GM12878 (cell line): ENCODE measurements at regions of chr2 and their contacts with region 1.

Region 1: GRCh38 chr2:77954931-77955330 is 432.8 kb upstream of the LRRTM4 start:
- DNase-seq: no peak
- ATAC-seq: no peak
- H3K4me3 ChIP-seq: no peak overlapping the region
- H3K27ac ChIP-seq: no peak overlapping the region
- H3K4me1 ChIP-seq: no peaks in the 10 kb centered on the region
- H3K27me3 ChIP-seq: no peaks in the 10 kb centered on the region
- CTCF ChIP-seq: peak in 2 of 3 experiments; percentile 11 to 24; a peak in 1 of 6 replicates
- EP300 ChIP-seq: no peak
- POLR2A ChIP-seq: no peak
- RAD21 ChIP-seq: no peak

Region 2: DNA sequence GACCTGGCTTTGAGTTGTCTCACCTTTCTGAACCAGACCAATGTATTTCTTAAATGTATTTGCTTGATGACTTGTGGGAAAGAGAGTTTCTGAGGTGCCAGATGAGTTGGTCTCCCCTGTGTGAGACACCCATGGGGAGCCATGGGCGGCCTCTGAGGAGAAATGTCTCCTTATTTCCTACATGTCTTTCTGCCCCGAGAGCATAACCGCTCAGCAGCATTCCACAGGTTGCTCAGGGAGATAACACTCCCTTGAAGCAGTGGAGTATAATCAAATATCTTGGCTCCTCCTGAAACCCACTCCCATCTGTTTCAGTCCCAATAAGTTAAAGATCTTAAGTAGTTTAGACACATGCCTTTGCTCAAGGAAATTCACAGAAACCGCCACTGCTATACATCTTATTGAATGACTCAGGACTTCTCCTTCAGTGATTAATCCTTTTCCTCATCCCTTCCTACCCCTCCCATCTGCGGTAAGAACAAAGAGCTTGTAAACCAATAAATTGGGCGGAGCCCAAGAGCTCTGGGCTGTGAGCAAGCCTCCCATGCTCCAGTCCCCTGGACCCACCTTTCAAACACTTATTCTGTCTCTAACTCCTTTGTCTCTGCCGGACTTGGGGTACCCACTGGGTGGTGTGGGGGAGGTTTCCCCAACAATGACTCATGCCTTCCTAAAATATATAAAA is 147.3 kb before region 1 on chr2:
- CTCF ChIA-PET with region 1: no interaction called
- POLR2A ChIA-PET with region 1: no interaction called
- RAD21 ChIA-PET with region 1: no interaction called
- SMC1A ChIA-PET with region 1: no interaction called
- in situ Hi-C with region 1: no loop called
- intact Hi-C with region 1: no loop called
- DNase-seq: no peak
- ATAC-seq: no peak
- H3K4me3 ChIP-seq: no peak overlapping the region
- H3K27ac ChIP-seq: no peak overlapping the region
- H3K4me1 ChIP-seq: no peaks in the 10 kb centered on the region
- H3K27me3 ChIP-seq: no peaks in the 10 kb centered on the region
- CTCF ChIP-seq: no peak
- EP300 ChIP-seq: no peak
- POLR2A ChIP-seq: no peak
- RAD21 ChIP-seq: no peak

Region 3: DNA sequence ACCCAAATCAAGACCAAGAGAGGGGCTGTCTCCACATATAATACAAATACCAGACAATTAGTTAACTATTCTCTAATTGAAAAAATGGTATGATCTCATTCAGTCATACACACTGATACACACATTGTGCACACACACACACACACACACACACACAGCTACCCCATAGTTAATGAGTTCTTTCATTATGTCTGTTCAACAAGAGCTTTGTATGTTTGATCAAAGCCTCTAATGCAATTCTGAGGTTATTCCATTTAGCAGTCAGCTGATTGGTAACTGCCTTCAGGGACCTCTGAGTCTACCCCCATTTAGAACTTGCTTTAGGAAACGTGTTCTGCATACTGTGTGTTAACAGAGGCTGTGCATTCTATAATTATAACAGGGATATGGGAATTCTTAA is 308.6 kb after region 1 on chr2:
- CTCF ChIA-PET with region 1: no interaction called
- POLR2A ChIA-PET with region 1: no interaction called
- RAD21 ChIA-PET with region 1: no interaction called
- SMC1A ChIA-PET with region 1: no interaction called
- in situ Hi-C with region 1: no loop called
- intact Hi-C with region 1: no loop called
- DNase-seq: no peak
- ATAC-seq: no peak
- H3K4me3 ChIP-seq: no peak overlapping the region
- H3K27ac ChIP-seq: no peak overlapping the region
- H3K4me1 ChIP-seq: no peaks in the 10 kb centered on the region
- H3K27me3 ChIP-seq: no peaks in the 10 kb centered on the region
- CTCF ChIP-seq: no peak
- EP300 ChIP-seq: no peak
- POLR2A ChIP-seq: no peak
- RAD21 ChIP-seq: no peak

Region 4: DNA sequence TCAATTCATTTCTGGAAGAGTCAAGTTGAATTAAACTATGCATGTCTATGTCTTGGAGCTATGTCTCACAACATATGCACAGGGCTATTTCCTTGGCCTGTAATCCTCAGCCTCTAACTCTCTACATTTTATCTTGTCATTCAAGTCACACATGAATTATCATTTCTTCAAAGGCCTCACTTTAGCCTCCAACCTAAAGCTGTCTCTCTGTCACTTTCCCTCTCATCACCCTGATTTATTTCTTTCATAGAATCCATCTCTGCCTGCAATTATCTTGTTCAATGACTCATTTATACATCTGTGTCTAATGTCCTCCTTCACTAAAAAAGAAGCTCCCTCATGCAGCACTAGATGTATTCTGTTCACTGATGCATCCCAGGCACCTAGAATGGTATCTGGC is 456.4 kb after region 1 on chr2:
- CTCF ChIA-PET with region 1: no interaction called
- POLR2A ChIA-PET with region 1: no interaction called
- RAD21 ChIA-PET with region 1: no interaction called
- SMC1A ChIA-PET with region 1: no interaction called
- in situ Hi-C with region 1: no loop called
- intact Hi-C with region 1: loop called (anchors 5 kb)
- DNase-seq: no peak
- ATAC-seq: no peak
- H3K4me3 ChIP-seq: no peak overlapping the region
- H3K27ac ChIP-seq: no peak overlapping the region
- H3K4me1 ChIP-seq: no peaks in the 10 kb centered on the region
- H3K27me3 ChIP-seq: no peaks in the 10 kb centered on the region
- CTCF ChIP-seq: no peak
- EP300 ChIP-seq: no peak
- POLR2A ChIP-seq: no peak
- RAD21 ChIP-seq: no peak